SK-MEL-5 (cell line): ENCODE measurements at regions of chr20 and their contacts with region 1.

Region 1: GRCh38 chr20:58236612-58237330 is 8.3 kb upstream of the ANKRD60 start:
- DNase-seq: peak; percentile 74

Region 2: GRCh38 chr20:58447511-58448391 is 211.0 kb after region 1 on chr20:
- in situ Hi-C with region 1: loop called (anchors 25 kb)
- DNase-seq: peak; percentile 82

Region 3: GRCh38 chr20:58650776-58651558 is 414.2 kb after region 1 on chr20 and contains the start of gene STX16:
- in situ Hi-C with region 1: loop called (anchors 25 kb)
- DNase-seq: peak; percentile 95
- total RNA-seq, gene STX16: 16.9 and 20.0 TPM in 2 replicates

Region 4: DNA sequence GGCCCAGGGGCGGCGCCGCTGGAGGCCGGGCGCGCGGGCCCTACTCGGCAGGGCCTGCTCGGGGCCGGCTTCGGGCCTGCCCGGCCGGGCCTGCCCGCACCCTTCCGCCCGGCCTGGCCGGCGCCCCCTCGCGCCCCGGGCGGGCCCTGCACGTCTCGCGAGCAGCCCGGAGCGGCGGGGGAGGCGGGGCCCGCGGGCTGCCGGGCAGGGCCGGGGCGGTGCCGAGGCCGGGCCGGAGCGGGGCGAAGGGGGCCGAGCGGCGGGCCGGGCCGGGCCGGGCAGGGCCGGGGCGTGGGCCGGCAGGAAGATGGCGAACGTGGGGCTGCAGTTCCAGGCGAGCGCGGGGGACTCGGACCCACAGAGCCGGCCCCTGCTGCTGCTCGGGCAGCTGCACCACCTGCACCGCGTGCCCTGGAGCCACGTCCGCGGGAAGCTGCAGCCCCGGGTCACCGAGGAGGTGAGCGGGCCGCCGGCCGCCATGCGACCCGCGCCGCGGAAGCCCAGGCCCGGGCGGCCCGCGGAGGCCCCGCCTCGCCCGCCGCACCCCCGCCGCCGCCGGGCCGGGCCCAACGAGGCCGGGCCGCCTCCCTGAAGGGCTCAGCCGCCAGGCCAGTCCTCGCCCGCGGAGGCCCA is 455.9 kb after region 1 on chr20 and contains the start of gene NPEPL1:
- in situ Hi-C with region 1: no loop called
- DNase-seq: peak; percentile 48
- total RNA-seq, gene NPEPL1: 3.2 and 3.4 TPM in 2 replicates